ENCODE measurements at regions of chr12 and their contacts with region 1.

Region 1: GRCh38 chr12:67441736-67442346 is 172.7 kb downstream of the CAND1 start:
- DNase-seq: peak; percentile 75 to 92 (median 83)

Region 2: DNA sequence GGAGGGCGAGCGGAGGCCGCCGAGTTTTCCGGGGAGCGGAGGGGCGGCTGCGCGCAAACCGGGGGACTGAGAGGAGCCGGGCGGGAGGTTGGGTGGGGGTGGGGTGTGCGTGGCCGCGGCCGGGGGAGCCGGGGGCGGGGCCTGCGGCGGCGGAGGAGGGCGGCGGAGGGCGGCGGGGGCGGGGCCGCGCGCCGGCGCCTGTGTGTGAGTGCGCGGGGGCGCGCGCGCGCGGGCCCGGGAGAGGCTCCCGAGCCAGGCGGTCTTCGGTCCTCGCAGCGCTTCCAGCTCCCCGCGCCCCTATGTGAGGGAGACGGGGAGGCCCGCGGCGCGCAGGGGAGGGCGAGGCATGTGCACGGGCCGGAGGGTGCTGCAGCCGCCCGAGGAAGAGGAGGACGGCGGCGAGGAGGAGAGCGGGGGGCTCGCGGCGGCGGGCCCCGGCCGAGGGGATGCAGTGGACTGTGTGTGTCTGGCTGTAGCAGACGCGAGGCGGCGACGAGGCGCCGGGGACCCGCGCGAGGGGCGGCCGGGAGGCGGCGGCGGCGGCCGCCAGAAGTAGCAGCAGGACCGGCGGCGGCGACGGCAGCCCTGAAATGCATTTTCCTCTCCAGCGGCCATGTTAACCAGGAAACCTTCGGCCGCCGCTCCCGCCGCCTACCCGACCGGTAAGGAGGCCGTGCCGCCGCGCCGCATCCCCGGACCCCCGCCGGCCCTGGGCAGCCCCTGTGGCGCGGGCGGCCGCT is 206.8 kb after region 1 on chr12 and contains the start of gene DYRK2:
- intact Hi-C with region 1: loop called (anchors 10 kb)
- DNase-seq: peak; percentile 25 to 88 (median 76)

Measured in head of caudate nucleus (tissue), 42 donors.